Mammary epithelial cell (primary cell): ENCODE measurements at regions of chr18 and their contacts with region 1.

Region 1: DNA sequence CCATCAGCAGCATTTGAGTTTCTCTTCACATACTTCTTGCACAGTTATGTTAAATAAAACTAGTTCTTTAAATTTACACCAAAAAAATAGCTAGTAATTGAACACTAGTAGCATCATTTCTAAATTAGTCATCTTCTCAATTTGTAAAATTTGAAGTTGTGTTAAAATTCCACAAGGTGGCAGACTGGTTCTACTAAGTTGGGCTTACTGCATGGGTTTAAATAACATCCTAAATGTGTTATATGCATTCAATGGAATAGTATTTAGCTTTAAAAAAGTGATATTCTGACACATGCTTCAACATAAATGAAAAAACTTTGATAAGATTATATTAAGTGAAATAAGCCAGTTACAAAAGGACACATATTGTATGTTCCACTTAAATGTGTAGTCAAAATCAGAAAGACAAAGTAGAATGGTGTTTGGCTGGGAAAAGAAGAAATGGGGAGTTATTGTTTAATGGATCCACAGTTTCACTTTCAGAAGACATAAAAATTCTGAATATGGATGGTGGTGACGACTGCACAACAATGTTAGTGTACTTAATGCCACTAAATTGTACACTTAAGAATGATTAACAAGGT is 28.7 kb upstream of the RPRD1A start:
- DNase-seq: peak; percentile 56
- H3K4me3 ChIP-seq: no peak overlapping the region
- H3K27ac ChIP-seq: no peak overlapping the region
- H3K4me1 ChIP-seq: no peaks in the 10 kb centered on the region
- H3K27me3 ChIP-seq: no peaks in the 10 kb centered on the region
- CTCF ChIP-seq: peak; percentile 47 to 58

Region 2: DNA sequence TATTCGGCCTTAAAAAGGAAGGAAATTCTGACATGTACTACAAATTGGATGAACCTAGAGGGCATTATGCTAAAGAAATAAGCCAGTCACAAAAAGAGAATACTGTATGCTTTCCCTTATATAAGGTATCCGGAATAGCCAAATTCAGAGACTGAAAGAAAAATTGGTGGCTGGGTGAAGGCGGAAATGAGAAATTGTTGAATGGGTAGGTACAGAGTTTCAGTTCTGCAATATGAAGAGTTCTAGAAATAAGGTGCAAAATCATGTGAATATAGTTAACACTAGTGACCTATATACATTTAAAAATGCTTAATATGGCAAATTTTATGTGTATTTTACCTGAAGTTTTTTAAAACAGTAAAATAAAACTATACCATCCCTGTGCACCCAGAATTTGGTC is 80.4 kb before region 1 on chr18:
- CTCF ChIA-PET with region 1: no interaction called
- dilution Hi-C with region 1: no loop called
- in situ Hi-C with region 1: no loop called
- intact Hi-C with region 1: loop called (anchors 2 kb)
- DNase-seq: no peak
- H3K4me3 ChIP-seq: no peak overlapping the region
- H3K27ac ChIP-seq: no peak overlapping the region
- H3K4me1 ChIP-seq: no peaks in the 10 kb centered on the region
- H3K27me3 ChIP-seq: no peaks in the 10 kb centered on the region
- CTCF ChIP-seq: no peak

Region 3: GRCh38 chr18:36139250-36139649 is 43.2 kb after region 1 on chr18:
- CTCF ChIA-PET with region 1: no interaction called
- dilution Hi-C with region 1: no loop called
- in situ Hi-C with region 1: no loop called
- intact Hi-C with region 1: no loop called
- DNase-seq: no peak
- H3K4me3 ChIP-seq: no peak overlapping the region
- H3K27ac ChIP-seq: no peak overlapping the region
- H3K4me1 ChIP-seq: no peaks in the 10 kb centered on the region
- H3K27me3 ChIP-seq: no peaks in the 10 kb centered on the region
- CTCF ChIP-seq: no peak

Region 4: GRCh38 chr18:36284671-36285295 is 188.8 kb after region 1 on chr18:
- CTCF ChIA-PET with region 1: interaction called, 4 read pairs
- dilution Hi-C with region 1: no loop called
- in situ Hi-C with region 1: loop called (anchors 5 to 10 kb)
- intact Hi-C with region 1: loop called (anchors 1 kb)
- DNase-seq: peak; percentile 56
- H3K4me3 ChIP-seq: no peak overlapping the region
- H3K27ac ChIP-seq: no peak overlapping the region
- H3K4me1 ChIP-seq: no peaks in the 10 kb centered on the region
- H3K27me3 ChIP-seq: no peaks in the 10 kb centered on the region
- CTCF ChIP-seq: peak; percentile 81 to 86

Region 5: DNA sequence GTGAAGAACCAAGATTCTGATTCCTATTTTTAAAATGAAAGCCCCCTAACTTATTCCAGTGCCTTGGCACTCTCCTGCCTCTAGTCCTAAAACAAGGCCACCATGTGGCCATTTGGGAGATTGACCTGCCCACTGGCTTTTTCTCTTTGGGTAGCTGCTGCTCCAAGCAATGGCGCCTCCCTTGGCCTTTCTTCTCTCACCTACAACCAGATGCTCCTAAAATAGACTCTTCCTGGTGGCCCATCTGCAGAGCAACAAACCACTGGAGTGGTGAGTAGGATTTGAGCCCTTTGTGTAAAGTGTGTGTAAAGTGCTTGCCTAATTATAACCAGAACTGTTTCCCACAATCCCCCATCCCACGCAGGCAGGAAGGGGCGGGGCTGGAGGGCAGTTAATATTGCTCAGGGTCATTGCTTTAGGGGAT is 315.7 kb after region 1 on chr18:
- CTCF ChIA-PET with region 1: no interaction called
- dilution Hi-C with region 1: no loop called
- in situ Hi-C with region 1: loop called in 1 of 2 experiments (anchors 25 kb)
- intact Hi-C with region 1: loop called (anchors 1 kb)
- DNase-seq: no peak
- H3K4me3 ChIP-seq: no peak overlapping the region
- H3K27ac ChIP-seq: no peak overlapping the region
- H3K4me1 ChIP-seq: peaks cover 4% of the 10 kb centered on the region
- H3K27me3 ChIP-seq: no peaks in the 10 kb centered on the region
- CTCF ChIP-seq: peak; percentile 48 to 63

Region 6: GRCh38 chr18:36419905-36420531 is 324.0 kb after region 1 on chr18:
- CTCF ChIA-PET with region 1: no interaction called
- dilution Hi-C with region 1: no loop called
- in situ Hi-C with region 1: loop called in 1 of 2 experiments (anchors 25 kb)
- intact Hi-C with region 1: no loop called
- DNase-seq: peak; percentile 84
- H3K4me3 ChIP-seq: no peak overlapping the region
- H3K27ac ChIP-seq: no peak overlapping the region
- H3K4me1 ChIP-seq: peaks cover 30% of the 10 kb centered on the region
- H3K27me3 ChIP-seq: no peaks in the 10 kb centered on the region
- CTCF ChIP-seq: peak; percentile 47 to 64

Region 7: GRCh38 chr18:36620788-36621187 is 524.8 kb after region 1 on chr18:
- CTCF ChIA-PET with region 1: no interaction called
- dilution Hi-C with region 1: no loop called
- in situ Hi-C with region 1: no loop called
- intact Hi-C with region 1: loop called (anchors 2 kb)
- DNase-seq: no peak
- H3K4me3 ChIP-seq: no peak overlapping the region
- H3K27ac ChIP-seq: no peak overlapping the region
- H3K4me1 ChIP-seq: peaks cover 14% of the 10 kb centered on the region
- H3K27me3 ChIP-seq: no peaks in the 10 kb centered on the region
- CTCF ChIP-seq: peak; percentile 13 to 32

Region 8: GRCh38 chr18:36688020-36688965 is 592.3 kb after region 1 on chr18:
- CTCF ChIA-PET with region 1: no interaction called
- dilution Hi-C with region 1: no loop called
- in situ Hi-C with region 1: no loop called
- intact Hi-C with region 1: loop called (anchors 10 kb)
- DNase-seq: peak; percentile 60
- H3K4me3 ChIP-seq: no peak overlapping the region
- H3K27ac ChIP-seq: no peak overlapping the region
- H3K4me1 ChIP-seq: no peaks in the 10 kb centered on the region
- H3K27me3 ChIP-seq: no peaks in the 10 kb centered on the region
- CTCF ChIP-seq: peak; percentile 82 to 97